ENCODE measurements at regions of chr17 and their contacts with region 1.

Region 1: DNA sequence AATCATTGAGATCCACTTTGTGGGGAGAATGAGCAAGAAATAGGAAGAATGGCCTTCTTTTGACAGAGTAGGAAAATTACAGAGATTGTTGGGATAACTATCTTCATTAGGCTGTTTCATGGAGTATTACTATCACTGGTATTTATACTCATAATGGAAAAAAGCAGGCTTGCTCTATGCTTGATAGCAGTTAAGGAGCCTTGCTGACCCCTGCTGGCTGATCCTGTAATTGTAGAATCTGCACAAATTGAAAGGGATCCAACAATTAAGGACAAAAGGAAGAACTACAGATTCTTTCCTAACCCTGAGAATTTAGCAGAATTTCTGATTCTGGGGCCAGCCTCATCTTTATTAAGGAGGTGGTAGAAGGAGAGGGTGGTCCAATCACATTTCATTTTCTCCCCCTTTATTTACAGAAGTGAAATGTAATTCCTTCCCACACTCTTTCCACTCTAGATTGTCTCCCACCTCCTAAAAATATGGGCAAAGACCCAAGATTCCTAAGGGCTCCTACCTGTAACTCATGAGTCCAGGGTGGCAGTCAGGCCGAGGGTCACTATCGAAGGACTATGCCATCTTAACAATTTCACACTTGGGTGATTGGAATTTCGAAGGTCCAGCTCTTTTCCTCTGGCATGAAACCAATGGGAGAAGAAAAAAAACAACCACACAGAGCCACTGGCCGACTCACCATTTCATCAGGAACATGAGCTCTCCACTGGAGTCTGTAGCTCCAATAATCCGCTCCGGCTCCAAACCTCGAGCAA is 26.3 kb downstream of the NFE2L1 start:
- DNase-seq: peak; percentile 69
- ATAC-seq: peak; percentile 86
- H3K4me3 ChIP-seq: no peak overlapping the region
- H3K27ac ChIP-seq: peak overlapping the region; percentile 21; the same call in 1 of the 2 replicates
- H3K4me1 ChIP-seq: 0 out of 4 replicates have a peak, but pooled peaks cover 0 to 2% of the 10 kb centered on the region in 2 experiments
- H3K27me3 ChIP-seq: no peaks in the 10 kb centered on the region
- CTCF ChIP-seq: peak; percentile 89 to 97 (median 94)
- POLR2A ChIP-seq: no peak
- RAD21 ChIP-seq: peak; percentile 92

Region 2: DNA sequence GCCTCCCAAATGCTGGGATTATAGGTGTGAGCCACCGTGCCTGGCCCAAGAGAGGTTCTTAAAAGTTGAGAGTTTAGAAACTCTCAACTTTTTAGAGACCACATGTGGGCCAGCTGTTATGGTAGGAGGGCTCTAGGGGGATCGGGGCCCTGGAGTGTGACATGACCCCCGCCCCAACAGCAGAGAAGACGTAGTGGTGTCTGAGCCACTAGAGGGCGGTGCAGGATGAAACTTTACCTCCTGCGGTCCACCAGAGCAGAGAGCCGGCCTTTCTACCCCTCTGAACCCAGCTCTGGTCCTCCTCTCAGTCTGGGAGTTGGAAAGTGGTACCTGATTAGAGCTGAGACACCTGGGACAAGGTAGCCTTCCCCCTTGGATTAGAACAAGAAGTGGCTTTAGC is 96.2 kb before region 1 on chr17:
- CTCF ChIA-PET with region 1: no interaction called
- POLR2A ChIA-PET with region 1: no interaction called
- RAD21 ChIA-PET with region 1: no interaction called
- intact Hi-C with region 1: no loop called
- DNase-seq: no peak
- ATAC-seq: peak; percentile 88
- H3K4me3 ChIP-seq: no peak overlapping the region
- H3K27ac ChIP-seq: no peak overlapping the region
- H3K4me1 ChIP-seq: no peaks in the 10 kb centered on the region
- H3K27me3 ChIP-seq: no peaks in the 10 kb centered on the region
- CTCF ChIP-seq: peak; percentile 73 to 88 (median 84)
- POLR2A ChIP-seq: no peak
- RAD21 ChIP-seq: peak; percentile 74

Region 3: DNA sequence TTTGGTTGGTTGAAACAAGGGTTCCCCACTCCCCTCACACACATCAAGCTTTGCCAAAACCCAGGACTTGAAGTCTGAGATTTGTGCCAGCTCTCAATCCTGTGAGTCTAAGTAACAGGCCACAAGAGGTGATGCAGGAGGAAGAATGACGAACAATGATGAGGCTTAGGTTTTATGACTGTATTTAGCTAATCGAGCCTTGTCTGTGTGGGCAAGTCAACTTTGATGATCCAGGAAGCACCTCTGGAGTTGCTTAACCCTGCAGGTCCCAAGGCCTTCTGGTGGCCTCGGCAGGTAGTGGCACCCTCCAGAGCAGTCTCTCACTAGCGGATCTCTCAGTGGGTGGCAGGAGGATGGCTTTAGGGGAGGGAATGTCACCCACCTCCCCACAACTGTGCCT is 74.9 kb before region 1 on chr17:
- CTCF ChIA-PET with region 1: no interaction called
- POLR2A ChIA-PET with region 1: no interaction called
- RAD21 ChIA-PET with region 1: no interaction called
- intact Hi-C with region 1: no loop called
- DNase-seq: no peak
- ATAC-seq: peak; percentile 77
- H3K4me3 ChIP-seq: no peak overlapping the region
- H3K27ac ChIP-seq: no peak overlapping the region
- H3K4me1 ChIP-seq: peaks cover 8 to 26% of the 10 kb centered on the region in 2 experiments
- H3K27me3 ChIP-seq: no peaks in the 10 kb centered on the region
- CTCF ChIP-seq: peak in 2 of 3 experiments; percentile 29 to 34; a peak in 4 of 6 replicates
- POLR2A ChIP-seq: no peak
- RAD21 ChIP-seq: no peak

Region 4: DNA sequence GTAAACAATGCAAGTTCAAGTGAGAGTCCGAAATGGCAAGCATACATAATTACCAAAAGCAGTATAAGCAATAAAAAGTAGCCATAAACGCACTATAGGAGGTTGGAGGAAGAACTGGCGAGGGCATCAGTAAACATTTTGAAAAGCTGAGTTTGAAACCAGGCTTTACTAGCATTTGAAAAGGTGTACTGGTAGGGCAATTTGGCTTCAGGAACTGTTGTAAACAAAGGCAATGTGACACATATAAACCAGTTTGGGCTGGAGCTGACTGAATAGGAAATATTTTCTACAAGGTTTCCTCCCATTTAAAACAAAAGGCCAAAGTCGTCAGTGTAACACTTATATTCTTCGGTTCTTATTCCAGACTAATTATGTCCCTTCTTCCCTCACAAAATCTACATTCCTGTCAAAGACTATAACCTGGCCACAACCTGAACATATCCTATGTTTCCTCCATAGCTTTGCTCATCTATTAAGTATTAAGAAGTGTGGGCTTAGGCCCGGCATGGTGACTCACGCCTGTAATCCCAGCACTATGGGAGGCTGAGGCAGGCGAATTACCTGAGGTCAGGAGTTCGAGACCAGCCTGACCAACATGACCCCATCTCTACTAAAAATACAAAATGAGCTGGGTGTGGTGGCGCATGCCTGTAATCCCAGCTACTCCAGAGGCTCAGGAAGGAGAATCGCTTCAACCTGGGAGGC is 19.0 kb after region 1 on chr17:
- CTCF ChIA-PET with region 1: interaction called, 12 read pairs
- POLR2A ChIA-PET with region 1: no interaction called
- RAD21 ChIA-PET with region 1: no interaction called
- intact Hi-C with region 1: no loop called
- DNase-seq: no peak
- ATAC-seq: no peak
- H3K4me3 ChIP-seq: no peak overlapping the region
- H3K27ac ChIP-seq: no peak overlapping the region
- H3K4me1 ChIP-seq: peaks cover 3 to 19% of the 10 kb centered on the region in 2 experiments; a peak in 2 of 4 replicates
- H3K27me3 ChIP-seq: no peaks in the 10 kb centered on the region
- CTCF ChIP-seq: no peak
- POLR2A ChIP-seq: no peak
- RAD21 ChIP-seq: no peak

Region 5: GRCh38 chr17:48101012-48101720 is 26.7 kb after region 1 on chr17 and contains the start of gene CBX1:
- CTCF ChIA-PET with region 1: interaction called, 19 read pairs
- POLR2A ChIA-PET with region 1: no interaction called
- RAD21 ChIA-PET with region 1: no interaction called
- intact Hi-C with region 1: no loop called
- DNase-seq: peak; percentile 94
- ATAC-seq: peak; percentile 92
- H3K4me3 ChIP-seq: peak within 1 kb of the TSS; percentile 93 to 94
- H3K27ac ChIP-seq: peak within 1 kb of the TSS; percentile 95
- H3K4me1 ChIP-seq: peaks cover 10 to 29% of the 10 kb centered on the region in 2 experiments
- H3K27me3 ChIP-seq: no peaks in the 10 kb centered on the region
- CTCF ChIP-seq: no peak
- POLR2A ChIP-seq: peak; percentile 67
- RAD21 ChIP-seq: no peak
- total RNA-seq, gene CBX1: 136 TPM

Region 6: GRCh38 chr17:48583708-48584222 is 509.3 kb after region 1 on chr17:
- CTCF ChIA-PET with region 1: interaction called, 10 read pairs
- POLR2A ChIA-PET with region 1: no interaction called
- RAD21 ChIA-PET with region 1: no interaction called
- intact Hi-C with region 1: no loop called
- DNase-seq: no peak
- ATAC-seq: no peak
- H3K4me3 ChIP-seq: no peak overlapping the region; a peak in 1 of 4 replicates
- H3K27ac ChIP-seq: peak overlapping the region; percentile 91
- H3K4me1 ChIP-seq: peaks cover 27 to 73% of the 10 kb centered on the region in 2 experiments
- H3K27me3 ChIP-seq: no peaks in the 10 kb centered on the region
- CTCF ChIP-seq: no peak
- POLR2A ChIP-seq: no peak
- RAD21 ChIP-seq: no peak

Measured in HCT116 (cell line).